GM12878 (cell line): ENCODE measurements at regions of chr6 and their contacts with region 1.

Region 1: DNA sequence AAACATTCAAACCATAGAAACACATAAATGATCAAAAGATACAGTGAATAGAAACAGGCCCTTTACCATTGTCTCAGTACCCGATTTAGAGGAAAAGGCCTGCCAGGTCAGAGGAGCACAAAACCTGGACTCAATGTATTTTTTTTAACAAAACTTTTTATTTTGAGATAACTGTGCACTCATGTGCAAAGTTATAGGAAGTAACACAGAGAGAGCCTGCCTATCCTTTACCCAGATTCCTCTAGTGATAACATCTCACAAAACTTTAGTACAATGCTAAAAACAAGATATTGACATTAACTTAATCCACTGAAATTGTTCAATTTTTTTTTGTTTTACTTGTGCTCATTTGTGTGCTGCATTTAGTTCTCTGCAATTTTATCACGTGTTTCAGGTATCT is 36.8 kb upstream of the SAMD3 start:
- DNase-seq: no peak
- ATAC-seq: peak; percentile 26
- H3K4me3 ChIP-seq: no peak overlapping the region
- H3K27ac ChIP-seq: peak overlapping the region; percentile 74
- H3K4me1 ChIP-seq: peaks cover 13% of the 10 kb centered on the region
- H3K27me3 ChIP-seq: no peaks in the 10 kb centered on the region
- CTCF ChIP-seq: no peak
- EP300 ChIP-seq: no peak
- POLR2A ChIP-seq: no peak
- RAD21 ChIP-seq: no peak

Region 2: DNA sequence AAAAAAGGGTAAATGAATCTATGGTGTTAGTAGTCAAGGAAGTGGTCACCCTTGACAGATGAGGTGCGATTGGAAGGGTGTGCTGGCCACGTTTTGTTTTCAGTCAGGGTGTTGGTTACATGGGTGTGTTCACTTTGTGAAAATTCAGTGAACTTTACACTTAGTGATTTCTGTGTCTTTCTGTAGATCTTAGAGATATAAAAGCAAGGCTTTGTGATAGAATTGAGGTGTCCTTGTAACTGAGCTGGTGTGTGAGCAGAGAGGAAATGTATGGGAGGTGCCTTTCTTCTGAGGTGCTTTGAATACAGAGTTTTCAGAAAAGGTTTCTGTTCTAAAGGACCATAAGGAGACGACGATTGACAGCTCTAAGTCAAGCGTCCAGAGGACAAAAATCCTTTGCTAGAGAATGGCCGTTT is 127.3 kb before region 1 on chr6:
- CTCF ChIA-PET with region 1: no interaction called
- POLR2A ChIA-PET with region 1: no interaction called
- RAD21 ChIA-PET with region 1: no interaction called
- SMC1A ChIA-PET with region 1: no interaction called
- in situ Hi-C with region 1: no loop called
- intact Hi-C with region 1: loop called (anchors 5 kb)
- DNase-seq: no peak
- ATAC-seq: peak; percentile 95
- H3K4me3 ChIP-seq: no peak overlapping the region
- H3K27ac ChIP-seq: no peak overlapping the region; the same call in 1 of the 2 replicates
- H3K4me1 ChIP-seq: peaks cover 6% of the 10 kb centered on the region; the same call in 1 of the 2 replicates
- H3K27me3 ChIP-seq: no peaks in the 10 kb centered on the region
- CTCF ChIP-seq: no peak
- EP300 ChIP-seq: no peak
- POLR2A ChIP-seq: no peak
- RAD21 ChIP-seq: no peak

Region 3: GRCh38 chr6:130211691-130212090 is 47.9 kb before region 1 on chr6:
- CTCF ChIA-PET with region 1: no interaction called
- POLR2A ChIA-PET with region 1: no interaction called
- RAD21 ChIA-PET with region 1: no interaction called
- SMC1A ChIA-PET with region 1: no interaction called
- in situ Hi-C with region 1: no loop called
- intact Hi-C with region 1: no loop called
- DNase-seq: no peak
- ATAC-seq: peak; percentile 61
- H3K4me3 ChIP-seq: no peak overlapping the region
- H3K27ac ChIP-seq: no peak overlapping the region
- H3K4me1 ChIP-seq: no peaks in the 10 kb centered on the region
- H3K27me3 ChIP-seq: no peaks in the 10 kb centered on the region
- CTCF ChIP-seq: no peak
- EP300 ChIP-seq: no peak
- POLR2A ChIP-seq: no peak
- RAD21 ChIP-seq: no peak

Region 4: DNA sequence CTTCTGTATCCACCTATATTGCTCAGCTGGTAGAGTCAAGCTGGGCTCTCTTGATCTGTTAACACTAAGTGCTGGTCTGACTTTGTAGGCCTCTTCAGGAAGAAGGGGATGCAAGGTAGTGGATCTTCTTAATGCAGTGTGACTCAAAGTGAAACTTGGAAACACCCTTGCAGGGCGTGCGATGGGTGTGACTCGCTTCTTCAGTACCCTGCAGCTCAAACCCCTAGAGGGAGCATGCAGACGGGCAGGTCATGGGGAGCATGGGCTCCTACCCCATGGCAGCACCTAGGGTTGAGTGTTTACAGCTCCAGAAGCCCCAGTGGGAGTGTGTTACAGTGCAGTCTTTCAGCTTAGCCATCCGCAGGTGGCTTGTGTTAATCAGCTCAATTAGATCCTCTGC is 36.0 kb before region 1 on chr6:
- CTCF ChIA-PET with region 1: no interaction called
- POLR2A ChIA-PET with region 1: no interaction called
- RAD21 ChIA-PET with region 1: no interaction called
- SMC1A ChIA-PET with region 1: no interaction called
- in situ Hi-C with region 1: no loop called
- intact Hi-C with region 1: loop called (anchors 2 kb)
- DNase-seq: peak; percentile 65
- ATAC-seq: peak; percentile 99
- H3K4me3 ChIP-seq: no peak overlapping the region
- H3K27ac ChIP-seq: no peak overlapping the region
- H3K4me1 ChIP-seq: peaks cover 8% of the 10 kb centered on the region
- H3K27me3 ChIP-seq: no peaks in the 10 kb centered on the region
- CTCF ChIP-seq: peak; percentile 22 to 44 (median 33); a peak in 4 of 6 replicates
- EP300 ChIP-seq: no peak
- POLR2A ChIP-seq: no peak
- RAD21 ChIP-seq: no peak